ENCODE measurements at regions of chr14 and their contacts with region 1.

Region 1: DNA sequence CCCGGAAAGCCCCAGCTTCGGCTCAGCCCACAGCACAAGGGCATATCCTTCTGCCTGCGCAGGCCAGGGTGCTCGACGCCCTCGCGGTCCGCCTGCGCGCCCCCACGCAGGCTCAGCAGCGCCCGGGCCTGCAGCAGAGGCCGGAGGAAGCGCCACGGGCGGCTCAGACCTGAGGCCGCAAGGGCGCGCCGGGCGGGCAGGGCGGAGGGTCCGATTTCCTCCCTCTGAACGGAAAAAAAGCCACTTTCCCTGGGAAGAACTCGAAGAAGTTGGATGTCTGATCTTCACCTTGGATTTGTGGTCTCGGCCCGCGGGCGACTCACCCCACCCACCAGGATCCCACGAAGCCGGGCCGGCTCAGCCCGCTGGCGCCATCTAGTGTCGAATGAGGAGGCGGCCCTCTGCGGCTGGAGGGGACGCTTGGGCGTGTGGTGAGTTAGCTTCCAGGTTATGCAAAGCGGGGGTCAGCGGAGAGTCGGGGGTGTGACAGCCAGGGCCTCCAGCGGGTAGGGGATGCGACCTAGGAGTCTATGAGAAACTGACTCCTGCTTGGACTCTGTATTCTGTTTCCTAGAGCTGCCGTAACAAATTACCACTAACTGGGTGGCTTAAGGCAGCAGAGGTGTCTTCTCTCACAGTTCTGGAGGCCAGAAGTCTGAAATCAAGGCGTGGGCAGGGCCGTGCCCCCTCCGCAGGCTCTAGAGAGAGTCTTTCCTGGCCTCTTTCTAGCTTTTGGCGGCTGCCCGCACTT is 40.0 kb upstream of the SRSF5 start:
- H3K4me3 ChIP-seq: peak overlapping the region; percentile 26
- H3K27ac ChIP-seq: no peak overlapping the region
- H3K4me1 ChIP-seq: no peaks in the 10 kb centered on the region
- CTCF ChIP-seq: peak; percentile 76

Region 2: DNA sequence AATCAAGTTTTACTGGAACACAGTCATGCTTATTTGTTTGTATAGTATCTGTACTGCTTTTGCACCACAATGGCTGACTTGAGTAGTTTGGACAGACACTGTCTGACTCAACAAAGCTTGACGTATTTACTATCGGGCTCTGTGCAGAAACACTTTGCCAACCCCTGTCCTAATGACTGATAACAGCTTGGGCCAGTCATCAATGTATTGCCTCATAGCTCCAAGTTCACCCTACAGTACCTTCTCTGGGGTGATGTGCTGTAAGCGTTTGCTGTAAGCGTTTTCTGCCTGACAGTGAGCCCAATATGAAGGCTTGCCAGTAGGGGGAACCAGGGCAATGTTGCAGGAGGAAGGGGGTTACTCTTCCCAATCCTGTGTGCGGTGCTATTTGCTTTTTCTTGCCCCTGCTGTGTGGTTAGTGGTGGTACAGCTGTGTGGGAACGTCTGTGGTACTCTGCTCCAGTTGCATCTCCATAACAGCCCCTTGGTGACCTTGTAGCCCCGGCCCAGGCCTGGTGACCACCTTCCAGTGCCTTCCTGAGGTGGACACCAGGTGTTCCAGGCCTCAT is 146.8 kb before region 1 on chr14:
- CTCF ChIA-PET with region 1: interaction called, 36 read pairs
- POLR2A ChIA-PET with region 1: no interaction called
- H3K4me3 ChIP-seq: no peak overlapping the region
- H3K27ac ChIP-seq: no peak overlapping the region
- H3K4me1 ChIP-seq: no peaks in the 10 kb centered on the region
- CTCF ChIP-seq: peak; percentile 90

Region 3: DNA sequence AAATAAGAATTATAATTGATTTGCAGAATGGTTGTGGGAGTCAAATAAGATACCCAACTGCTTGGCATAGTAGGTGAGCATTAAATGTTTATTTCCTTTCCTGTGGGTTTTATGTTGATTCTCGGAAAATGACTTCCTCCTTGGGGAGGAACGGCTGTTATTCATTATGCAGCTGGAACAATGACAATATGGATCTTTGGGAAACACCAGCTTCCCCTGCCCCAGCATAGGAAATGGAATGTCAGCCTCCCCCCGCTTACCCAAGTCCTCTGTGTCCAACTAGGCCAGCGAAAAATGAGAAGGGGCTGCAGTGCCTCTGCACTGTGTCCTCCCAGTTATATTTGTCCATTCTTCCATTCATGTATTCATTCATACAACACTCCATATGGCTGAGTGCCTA is 140.5 kb before region 1 on chr14:
- CTCF ChIA-PET with region 1: interaction called, 36 read pairs
- POLR2A ChIA-PET with region 1: no interaction called
- H3K4me3 ChIP-seq: no peak overlapping the region
- H3K27ac ChIP-seq: no peak overlapping the region
- H3K4me1 ChIP-seq: no peaks in the 10 kb centered on the region
- CTCF ChIP-seq: no peak

Region 4: GRCh38 chr14:69606258-69607184 is 120.4 kb before region 1 on chr14:
- CTCF ChIA-PET with region 1: interaction called, 39 read pairs
- POLR2A ChIA-PET with region 1: no interaction called
- H3K4me3 ChIP-seq: no peak overlapping the region
- H3K27ac ChIP-seq: no peak overlapping the region
- H3K4me1 ChIP-seq: no peaks in the 10 kb centered on the region
- CTCF ChIP-seq: no peak

Region 5: GRCh38 chr14:69712599-69713088 is 14.3 kb before region 1 on chr14:
- CTCF ChIA-PET with region 1: interaction called, 18 read pairs
- POLR2A ChIA-PET with region 1: no interaction called
- H3K4me3 ChIP-seq: no peak overlapping the region
- H3K27ac ChIP-seq: peak overlapping the region; percentile 97
- H3K4me1 ChIP-seq: peaks cover 40% of the 10 kb centered on the region
- CTCF ChIP-seq: no peak

Region 6: DNA sequence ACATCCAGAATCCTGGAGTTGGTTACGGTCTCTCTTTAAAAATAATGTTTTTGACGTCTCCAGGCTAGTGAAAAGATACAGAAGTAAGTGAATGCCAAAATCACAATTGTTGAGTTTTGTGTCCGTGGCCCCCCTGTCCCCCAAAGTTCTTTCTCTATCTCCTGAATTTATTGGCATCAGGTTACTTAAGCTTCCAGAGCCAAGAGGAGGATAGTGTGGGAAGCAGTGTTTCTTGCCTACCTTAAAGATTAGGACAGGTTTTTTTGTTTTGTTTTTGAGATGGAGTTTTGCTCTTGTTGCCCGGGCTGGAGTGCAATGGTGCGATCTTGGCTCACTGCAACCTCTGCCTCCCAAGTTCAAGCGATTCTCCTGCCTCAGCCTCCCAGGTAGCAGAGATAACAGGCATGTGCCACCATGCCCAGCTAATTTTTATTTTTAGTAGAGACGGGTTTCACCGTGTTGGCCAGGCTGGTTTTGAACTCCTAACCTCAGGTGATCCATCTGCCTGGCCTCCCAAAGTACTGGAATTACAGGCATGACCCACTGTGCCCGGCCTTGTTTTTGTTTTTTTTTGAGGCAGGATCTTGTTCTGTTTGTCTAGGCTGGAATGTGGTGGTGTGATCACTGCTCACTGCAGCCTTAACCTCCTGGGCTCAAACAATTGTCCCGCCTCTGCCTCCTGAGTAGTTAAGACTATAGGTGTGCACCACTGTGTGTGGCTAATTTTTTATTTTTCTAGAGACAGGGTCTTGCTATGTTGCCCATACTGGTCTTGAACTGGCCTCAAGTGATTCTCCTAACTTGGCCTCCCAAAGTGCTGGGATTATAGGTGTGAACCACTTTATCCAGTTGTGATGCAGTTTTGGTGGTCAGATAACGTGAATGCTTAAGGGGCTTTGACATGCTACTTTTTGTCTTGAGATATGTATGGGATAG is 45.4 kb after region 1 on chr14:
- CTCF ChIA-PET with region 1: no interaction called
- POLR2A ChIA-PET with region 1: no interaction called
- H3K4me3 ChIP-seq: no peak overlapping the region
- H3K27ac ChIP-seq: no peak overlapping the region
- H3K4me1 ChIP-seq: no peaks in the 10 kb centered on the region
- CTCF ChIP-seq: no peak